T-cell (primary cell): ENCODE measurements at regions of chr9 and their contacts with region 1.

Region 1: GRCh38 chr9:33480087-33480486 is 6.4 kb upstream of the NOL6 start:
- DNase-seq: no peak
- ATAC-seq: no peak
- H3K4me3 ChIP-seq: no peak overlapping the region
- H3K4me3 Mint-ChIP-seq: no peak overlapping the region
- H3K27ac ChIP-seq: no peak overlapping the region
- H3K27ac Mint-ChIP-seq: no peak overlapping the region
- H3K4me1 ChIP-seq: no peaks in the 10 kb centered on the region
- H3K4me1 Mint-ChIP-seq: no peaks in the 10 kb centered on the region
- H3K27me3 ChIP-seq: no peaks in the 10 kb centered on the region
- H3K27me3 Mint-ChIP-seq: no peaks in the 10 kb centered on the region

Region 2: GRCh38 chr9:32764140-32764539 is 715.9 kb before region 1 on chr9:
- CTCF ChIA-PET with region 1: no interaction called
- POLR2A ChIA-PET with region 1: no interaction called
- DNase-seq: no peak
- ATAC-seq: no peak
- H3K4me3 ChIP-seq: no peak overlapping the region
- H3K4me3 Mint-ChIP-seq: no peak overlapping the region
- H3K27ac ChIP-seq: no peak overlapping the region
- H3K27ac Mint-ChIP-seq: no peak overlapping the region
- H3K4me1 ChIP-seq: no peaks in the 10 kb centered on the region
- H3K4me1 Mint-ChIP-seq: no peaks in the 10 kb centered on the region
- H3K27me3 ChIP-seq: peaks cover 0 to 5% of the 10 kb centered on the region in 2 experiments
- H3K27me3 Mint-ChIP-seq: peaks cover 10 to 21% of the 10 kb centered on the region in 2 donors

Region 3: DNA sequence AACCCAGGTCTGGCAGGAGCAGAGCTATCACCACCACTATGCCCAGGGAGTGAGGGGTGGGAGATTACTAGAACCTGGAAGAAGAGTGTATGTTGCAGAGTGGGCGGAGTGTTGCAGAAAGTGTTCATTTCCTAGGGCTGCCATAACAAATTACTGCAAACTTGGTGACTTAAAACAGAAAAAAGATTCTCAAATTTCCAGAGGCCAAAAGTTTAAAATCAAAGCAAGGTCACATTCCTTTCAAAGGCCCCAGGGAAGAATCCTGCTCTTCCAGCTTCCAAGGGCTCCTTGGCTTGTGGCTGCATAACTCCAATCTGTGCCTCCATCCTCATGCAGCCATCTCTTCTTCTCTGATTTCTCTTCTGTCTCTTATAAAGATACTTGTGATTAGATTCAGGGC is 270.7 kb before region 1 on chr9:
- CTCF ChIA-PET with region 1: no interaction called
- POLR2A ChIA-PET with region 1: no interaction called
- DNase-seq: no peak
- ATAC-seq: no peak
- H3K4me3 ChIP-seq: no peak overlapping the region
- H3K4me3 Mint-ChIP-seq: no peak overlapping the region
- H3K27ac ChIP-seq: no peak overlapping the region
- H3K27ac Mint-ChIP-seq: no peak overlapping the region
- H3K4me1 ChIP-seq: no peaks in the 10 kb centered on the region
- H3K4me1 Mint-ChIP-seq: no peaks in the 10 kb centered on the region
- H3K27me3 ChIP-seq: no peaks in the 10 kb centered on the region
- H3K27me3 Mint-ChIP-seq: no peaks in the 10 kb centered on the region

Region 4: GRCh38 chr9:33731142-33731541 is 251.1 kb after region 1 on chr9:
- CTCF ChIA-PET with region 1: no interaction called
- POLR2A ChIA-PET with region 1: interaction called in 1 of 2 experiments, 10 read pairs
- DNase-seq: no peak
- ATAC-seq: no peak
- H3K4me3 ChIP-seq: no peak overlapping the region
- H3K4me3 Mint-ChIP-seq: no peak overlapping the region
- H3K27ac ChIP-seq: no peak overlapping the region
- H3K27ac Mint-ChIP-seq: no peak overlapping the region
- H3K4me1 ChIP-seq: no peaks in the 10 kb centered on the region
- H3K4me1 Mint-ChIP-seq: no peaks in the 10 kb centered on the region
- H3K27me3 ChIP-seq: peaks cover 0 to 20% of the 10 kb centered on the region in 2 experiments
- H3K27me3 Mint-ChIP-seq: peaks cover 30 to 39% of the 10 kb centered on the region in 2 donors